ENCODE measurements at regions of chr15 and their contacts with region 1.

Region 1: DNA sequence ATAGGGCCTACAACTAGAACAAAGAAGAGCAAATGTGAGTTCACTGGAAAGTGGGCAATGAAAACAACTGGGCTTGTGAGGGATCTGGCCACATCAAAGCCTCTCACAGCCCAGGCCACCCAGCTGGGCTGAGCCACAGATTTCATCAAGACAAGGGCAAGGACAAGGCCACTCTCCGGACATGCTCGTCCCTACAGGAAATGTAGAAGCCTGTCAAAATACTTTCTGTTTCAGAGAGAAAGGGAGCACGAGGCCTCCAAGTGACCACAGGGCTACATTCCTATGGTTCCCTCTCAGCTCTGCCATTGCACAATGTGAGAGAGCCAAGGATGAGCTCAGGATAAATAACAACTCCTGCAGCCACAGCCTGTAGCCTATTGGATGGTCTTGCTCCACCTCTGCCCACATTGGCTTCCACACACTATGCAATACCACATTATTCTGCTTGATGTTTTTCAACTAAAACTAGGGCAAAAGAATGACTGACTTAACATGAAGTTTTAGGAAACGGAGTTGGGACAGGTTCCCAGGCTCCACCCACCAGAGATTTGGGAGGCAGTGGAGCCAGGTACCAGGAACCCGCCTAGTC is 12.1 kb downstream of the TBC1D2B start:
- DNase-seq: no peak
- H3K4me3 ChIP-seq: peak overlapping the region; percentile 23
- H3K4me3 Mint-ChIP-seq: no peak overlapping the region
- H3K27ac ChIP-seq: peak overlapping the region; percentile 17
- H3K27ac Mint-ChIP-seq: no peak overlapping the region
- H3K4me1 ChIP-seq: peaks cover 95% of the 10 kb centered on the region
- H3K4me1 Mint-ChIP-seq: peaks cover 2 to 9% (median 5%) of the 10 kb centered on the region in 3 donors
- H3K27me3 ChIP-seq: no peaks in the 10 kb centered on the region
- H3K27me3 Mint-ChIP-seq: peaks cover 0 to 1% of the 10 kb centered on the region in 2 donors

Region 2: DNA sequence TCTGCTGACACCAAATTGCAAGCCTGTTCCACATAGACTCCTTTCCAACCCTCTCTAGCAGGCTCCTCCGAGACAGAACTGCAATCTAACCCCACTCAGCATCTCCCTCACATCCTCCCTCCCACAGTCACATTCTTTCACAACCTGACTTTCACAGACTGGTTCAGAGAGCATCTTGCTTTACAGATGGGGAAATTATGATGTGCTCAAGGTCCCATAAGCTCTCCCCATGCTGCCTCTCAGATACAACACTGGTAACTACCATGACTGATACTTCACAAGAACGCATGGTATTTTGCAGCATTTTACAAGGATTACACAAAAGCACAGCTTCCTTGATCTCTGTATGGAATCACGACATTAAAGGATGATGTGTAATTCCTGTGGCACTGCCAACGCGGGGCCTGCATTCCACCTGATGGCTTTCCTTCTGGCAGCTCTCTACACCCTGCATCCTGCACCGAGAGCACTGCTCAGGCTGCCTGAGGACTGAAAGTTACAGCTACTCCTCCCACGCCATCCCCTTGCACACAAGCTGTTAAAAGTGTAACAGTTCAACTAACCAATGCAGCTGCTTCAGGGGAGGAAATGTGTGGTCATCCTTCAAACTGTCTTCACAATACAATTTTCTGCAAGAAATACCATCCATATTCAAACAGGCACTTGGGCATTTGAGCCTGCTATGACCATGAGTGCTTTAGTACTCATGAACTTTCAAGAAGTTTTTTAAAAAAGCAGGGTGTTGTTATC is 15.5 kb before region 1 on chr15:
- CTCF ChIA-PET with region 1: interaction called, 25 read pairs
- POLR2A ChIA-PET with region 1: interaction called, 16 read pairs
- DNase-seq: peak in 3 of 5 donors; percentile 33 to 66 (median 46)
- H3K4me3 ChIP-seq: peak overlapping the region; percentile 38
- H3K4me3 Mint-ChIP-seq: peak overlapping the region; percentile 6 to 87 (median 74)
- H3K27ac ChIP-seq: peak overlapping the region; percentile 75
- H3K27ac Mint-ChIP-seq: peak overlapping the region; percentile 87 to 99 (median 97)
- H3K4me1 ChIP-seq: peaks cover 96% of the 10 kb centered on the region
- H3K4me1 Mint-ChIP-seq: peaks cover 98 to 100% (median 100%) of the 10 kb centered on the region in 3 donors
- H3K27me3 ChIP-seq: no peaks in the 10 kb centered on the region
- H3K27me3 Mint-ChIP-seq: no peaks in the 10 kb centered on the region

Measured in CD8-positive, alpha-beta memory T cell (primary cell).